Prostate gland (tissue), 2 donors: ENCODE measurements at regions of chr22 and their contacts with region 1.

Region 1: DNA sequence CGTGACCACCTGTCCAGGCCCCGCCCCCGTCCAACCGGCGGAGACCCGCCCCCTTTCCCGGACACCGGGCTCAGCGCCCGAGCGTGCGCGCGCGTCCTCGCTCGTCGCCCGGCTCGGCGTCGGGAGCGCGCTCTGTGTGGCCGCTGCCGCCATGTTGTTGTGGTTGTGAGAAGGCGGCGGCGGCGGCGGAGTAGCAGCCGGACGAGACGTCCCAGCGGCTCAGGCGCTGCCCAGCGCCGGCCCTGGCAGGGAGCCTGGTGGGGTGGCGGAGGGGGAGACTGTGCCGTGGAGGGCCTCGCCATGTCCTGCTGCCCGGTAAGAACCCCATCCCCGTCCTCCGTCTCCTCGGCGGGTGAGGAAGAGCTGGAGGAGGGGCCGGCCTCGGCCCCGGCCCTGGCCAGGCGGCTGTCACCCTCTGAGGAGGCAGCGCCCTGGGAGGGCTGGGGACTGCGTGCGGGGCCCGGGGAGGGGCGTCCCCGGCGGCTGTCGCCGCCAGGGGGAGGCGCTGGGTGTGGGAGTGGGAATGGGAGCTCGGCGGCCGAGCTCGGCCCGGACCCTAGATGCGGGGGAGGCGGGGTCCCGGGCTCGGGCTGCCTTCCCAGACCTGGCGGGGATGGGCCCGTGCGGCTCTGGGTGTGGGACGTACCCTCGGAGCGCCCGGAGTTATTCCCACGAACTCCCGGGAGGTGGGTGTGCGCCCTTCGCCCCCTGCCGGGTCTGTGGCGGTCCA is at the start of gene MTMR3:
- DNase-seq: peak; percentile 95
- H3K4me3 ChIP-seq: peak within 1 kb of the TSS; percentile 88 to 100
- H3K27ac ChIP-seq: peak within 1 kb of the TSS; percentile 98 to 99
- H3K4me1 ChIP-seq: no peaks in the 10 kb centered on the region
- H3K27me3 ChIP-seq: no peaks in the 10 kb centered on the region
- CTCF ChIP-seq: peak; percentile 33 to 70 (median 53)
- POLR2A ChIP-seq: peak; percentile 80
- total RNA-seq, gene MTMR3: 37.9 to 93.7 TPM

Region 2: GRCh38 chr22:29766632-29767170 is 116.5 kb before region 1 on chr22 and contains the start of gene ZMAT5:
- intact Hi-C with region 1: loop called (anchors 10 kb)
- DNase-seq: peak; percentile 97
- H3K4me3 ChIP-seq: peak within 1 kb of the TSS; percentile 54 to 78
- H3K27ac ChIP-seq: peak within 1 kb of the TSS; percentile 80 to 83
- H3K4me1 ChIP-seq: peaks cover 11% of the 10 kb centered on the region
- H3K27me3 ChIP-seq: no peaks in the 10 kb centered on the region
- CTCF ChIP-seq: peak in 1 of 4 experiments; percentile 15
- POLR2A ChIP-seq: peak; percentile 90
- total RNA-seq, gene ZMAT5: 32.9 to 33.5 TPM

Region 3: GRCh38 chr22:30183861-30184278 is 300.7 kb after region 1 on chr22:
- intact Hi-C with region 1: no loop called
- DNase-seq: no peak
- H3K4me3 ChIP-seq: no peak overlapping the region
- H3K27ac ChIP-seq: no peak overlapping the region
- H3K4me1 ChIP-seq: no peaks in the 10 kb centered on the region
- H3K27me3 ChIP-seq: no peaks in the 10 kb centered on the region
- CTCF ChIP-seq: no peak
- POLR2A ChIP-seq: no peak